Activated naive CD4-positive, alpha-beta T cell treated with anti-CD3 and anti-CD28 coated beads for 36 hours (primary cell): ENCODE measurements at regions of chr3 and their contacts with region 1.

Region 1: DNA sequence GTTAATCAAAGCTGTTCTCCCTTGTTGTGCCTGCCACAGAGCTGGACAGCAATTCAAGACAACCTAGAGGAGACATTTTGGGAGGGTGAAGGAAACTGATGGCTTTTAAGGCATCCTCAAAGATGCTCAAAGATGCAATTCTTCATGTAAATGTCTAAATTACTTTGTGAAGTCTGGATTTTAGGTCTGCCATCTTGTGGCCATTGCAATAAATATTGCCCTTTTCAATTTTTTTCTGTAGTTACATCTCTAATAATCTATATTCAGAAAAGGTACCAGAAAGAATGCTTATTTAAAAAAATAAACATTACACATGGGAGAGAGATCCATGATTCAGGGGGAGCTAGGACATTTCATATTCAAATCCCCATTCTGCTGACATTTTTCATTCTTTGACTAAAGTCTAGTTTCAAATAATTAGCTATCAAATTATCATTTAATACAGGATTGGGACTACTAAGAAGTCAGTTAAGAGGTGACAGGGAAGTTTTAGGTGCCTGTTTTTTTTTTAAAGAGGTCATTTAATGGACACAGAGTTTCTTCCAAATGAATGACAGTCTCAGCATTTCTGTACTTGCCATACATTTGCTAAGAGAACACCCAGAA is 259.8 kb upstream of the WNT5A start:
- DNase-seq: no peak
- H3K4me3 Mint-ChIP-seq: no peak overlapping the region
- H3K27ac Mint-ChIP-seq: no peak overlapping the region
- H3K4me1 Mint-ChIP-seq: no peaks in the 10 kb centered on the region
- H3K27me3 Mint-ChIP-seq: no peaks in the 10 kb centered on the region

Region 2: DNA sequence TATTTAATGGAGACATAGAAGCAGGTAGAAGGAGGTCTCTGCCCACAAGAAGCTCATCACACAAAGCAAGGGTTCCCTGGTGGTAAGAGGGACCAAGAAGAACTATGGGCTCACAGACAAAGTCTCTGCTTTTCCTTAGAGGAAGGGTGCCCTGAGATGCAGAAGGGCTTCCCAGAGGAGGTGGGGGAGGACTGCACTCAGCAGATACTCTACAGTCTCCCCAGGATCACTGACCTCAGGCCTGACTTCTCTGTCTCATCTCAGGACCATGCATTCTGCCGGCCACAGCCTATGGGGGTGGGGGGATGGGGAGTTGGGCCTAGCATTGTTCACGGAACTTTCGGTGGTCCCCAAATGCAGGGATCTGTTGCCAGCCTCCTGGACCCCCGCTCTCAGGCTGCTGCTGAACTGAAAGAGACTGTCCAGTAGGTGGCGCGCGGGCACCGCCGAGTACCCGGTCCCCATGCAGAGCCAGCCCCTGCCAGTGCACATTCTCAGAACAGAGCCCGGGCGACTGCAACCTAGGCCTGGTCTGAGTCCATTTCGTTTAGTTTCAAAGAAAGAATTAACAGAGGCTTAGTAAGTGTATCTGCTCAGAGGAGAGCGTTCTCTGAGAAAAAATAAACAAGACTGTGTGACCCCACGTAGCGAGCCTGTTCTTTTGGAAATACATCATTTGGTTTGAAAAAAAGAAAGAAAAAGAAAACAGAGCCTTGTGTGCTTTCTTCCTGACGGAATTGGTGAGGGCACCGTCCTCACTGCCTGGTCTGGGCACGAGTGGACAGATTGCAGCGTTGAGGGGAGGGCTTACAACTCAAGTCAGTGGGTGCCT is 893.1 kb before region 1 on chr3:
- CTCF ChIA-PET with region 1: no interaction called
- intact Hi-C with region 1: loop called (anchors 10 kb)
- DNase-seq: peak; percentile 55
- H3K4me3 Mint-ChIP-seq: no peak overlapping the region
- H3K27ac Mint-ChIP-seq: no peak overlapping the region
- H3K4me1 Mint-ChIP-seq: no peaks in the 10 kb centered on the region
- H3K27me3 Mint-ChIP-seq: peaks cover 6% of the 10 kb centered on the region